ENCODE measurements at regions of chr16 and their contacts with region 1.

Region 1: DNA sequence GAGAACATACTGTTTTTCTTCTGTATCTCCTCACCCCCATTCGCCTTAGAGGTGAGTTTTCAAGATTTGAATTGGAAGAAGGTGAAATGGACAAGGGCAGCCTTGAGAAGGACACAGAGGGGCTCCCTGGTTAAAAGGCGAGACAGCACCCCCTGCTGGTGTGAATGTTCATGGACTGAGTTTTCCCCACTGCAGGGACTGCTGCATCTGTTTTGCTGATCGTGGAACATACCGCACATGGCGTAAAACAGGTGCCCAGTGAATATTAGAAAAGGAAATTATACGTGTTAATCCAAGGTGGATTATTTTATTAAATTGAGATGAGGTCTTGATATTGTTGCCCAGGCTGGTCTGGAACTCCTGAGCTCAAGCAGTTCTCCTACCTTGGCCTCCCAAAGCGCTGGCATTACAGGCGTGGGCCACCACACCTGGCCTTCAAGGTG is 54.5 kb downstream of the NDE1 start:
- DNase-seq: peak; percentile 67 to 91 (median 74)
- H3K4me3 ChIP-seq: no peak overlapping the region
- H3K27ac ChIP-seq: no peak overlapping the region
- H3K4me1 ChIP-seq: no peaks in the 10 kb centered on the region
- H3K27me3 ChIP-seq: no peaks in the 10 kb centered on the region
- CTCF ChIP-seq: peak; percentile 65 to 87 (median 74)
- POLR2A ChIP-seq: no peak

Region 2: DNA sequence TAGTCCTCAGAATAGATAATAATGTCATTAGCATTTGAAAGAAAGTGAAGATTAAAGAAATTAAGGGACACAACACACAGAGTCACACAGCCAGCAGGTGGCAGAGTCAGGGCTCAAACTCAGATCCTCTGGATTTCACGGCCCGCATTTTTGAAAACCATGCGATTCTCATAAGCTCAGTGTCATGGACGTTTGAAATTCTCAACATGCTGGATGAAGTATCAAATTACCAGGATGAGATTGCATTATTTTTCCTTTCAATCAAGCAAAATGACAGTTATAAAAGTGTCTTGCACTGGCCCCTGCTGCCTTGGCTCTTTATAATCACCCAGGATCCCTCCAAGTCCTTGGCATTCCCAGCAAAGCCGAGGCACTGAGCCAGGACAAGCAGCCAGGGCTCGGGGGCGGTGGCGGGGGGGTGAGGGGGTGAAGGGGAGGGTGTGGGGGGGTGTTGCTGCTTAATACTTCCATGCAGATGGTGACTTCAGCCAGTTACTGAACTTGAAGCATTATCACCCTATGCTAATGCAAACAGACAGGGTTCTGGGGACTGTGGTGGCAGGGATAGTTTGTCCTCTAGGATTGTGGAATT is 276.8 kb before region 1 on chr16:
- intact Hi-C with region 1: loop called in 1 of 2 experiments (anchors 10 kb)
- DNase-seq: peak; percentile 57 to 85 (median 75)
- H3K4me3 ChIP-seq: no peak overlapping the region
- H3K27ac ChIP-seq: peak overlapping the region in 2 of 5 donors; percentile 13 to 50
- H3K4me1 ChIP-seq: peaks cover 0 to 7% of the 10 kb centered on the region in 2 donors
- H3K27me3 ChIP-seq: no peaks in the 10 kb centered on the region
- CTCF ChIP-seq: peak; percentile 42 to 82 (median 70)
- POLR2A ChIP-seq: no peak

Region 3: GRCh38 chr16:15988268-15989013 is 283.9 kb after region 1 on chr16:
- intact Hi-C with region 1: no loop called
- DNase-seq: peak in 1 of 7 donors; percentile 12
- H3K4me3 ChIP-seq: no peak overlapping the region
- H3K27ac ChIP-seq: peak overlapping the region in 2 of 5 donors; percentile 34 to 58
- H3K4me1 ChIP-seq: peaks cover 0 to 10% of the 10 kb centered on the region in 2 donors
- H3K27me3 ChIP-seq: no peaks in the 10 kb centered on the region
- CTCF ChIP-seq: no peak
- POLR2A ChIP-seq: no peak